Activated naive CD4-positive, alpha-beta T cell treated with anti-CD3 and anti-CD28 coated beads, Interleukin-2, amount 10 ng/mL, durations not matched to agents 7 days and 5 days (primary cell): ENCODE measurements at regions of chr1 and their contacts with region 1.

Region 1: DNA sequence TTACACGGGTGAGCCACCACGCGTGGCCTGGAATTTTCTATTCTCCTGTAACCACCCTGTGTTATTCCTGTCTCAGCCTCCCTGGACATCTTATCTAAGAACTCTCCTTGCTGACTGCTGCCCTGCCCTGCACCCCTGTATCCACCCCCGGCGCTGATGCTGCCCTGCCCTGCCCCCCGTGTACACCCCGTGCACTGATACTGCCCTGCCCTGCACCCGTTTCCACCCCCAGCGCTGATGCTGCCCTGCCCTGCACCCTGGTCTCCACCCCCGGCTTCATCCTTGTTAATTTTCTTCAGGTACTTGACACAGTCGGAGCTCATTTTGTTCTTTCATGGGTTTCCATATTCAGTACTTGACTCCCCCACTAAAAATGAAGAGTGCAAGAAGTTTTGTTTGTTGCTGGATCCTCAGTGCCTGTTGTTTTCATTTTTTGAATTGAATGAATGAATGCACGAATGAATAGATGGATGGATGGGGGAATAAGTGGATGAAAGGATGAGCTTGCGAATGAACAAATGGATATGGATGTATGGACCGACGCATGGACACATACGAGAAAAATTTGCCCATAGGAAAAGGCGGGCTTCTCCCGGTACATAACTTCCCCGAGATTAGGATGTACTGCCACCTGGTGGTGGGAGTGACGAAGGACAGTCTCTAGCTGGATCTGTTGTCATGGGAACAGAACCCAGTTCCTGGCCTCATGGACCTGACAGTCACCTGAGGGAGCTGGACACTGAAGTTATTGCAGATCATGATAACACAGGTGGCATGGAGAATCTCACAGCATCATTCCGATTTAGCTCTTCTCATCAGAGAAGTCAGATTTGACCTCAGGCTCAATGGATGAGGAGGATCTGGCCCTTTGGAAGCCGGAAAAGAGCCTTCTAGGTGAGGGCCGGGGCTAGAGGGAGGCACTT is 14.9 kb downstream of the AADACL4 start:
- DNase-seq: peak; percentile 81
- H3K4me3 Mint-ChIP-seq: no peak overlapping the region
- H3K27ac Mint-ChIP-seq: peak overlapping the region; percentile 0
- H3K4me1 Mint-ChIP-seq: peaks cover 8% of the 10 kb centered on the region
- H3K27me3 Mint-ChIP-seq: peaks cover 35% of the 10 kb centered on the region

Region 2: GRCh38 chr1:12275369-12275768 is 383.4 kb before region 1 on chr1:
- CTCF ChIA-PET with region 1: interaction called, 38 read pairs
- DNase-seq: peak; percentile 61
- H3K4me3 Mint-ChIP-seq: no peak overlapping the region
- H3K27ac Mint-ChIP-seq: no peak overlapping the region
- H3K4me1 Mint-ChIP-seq: no peaks in the 10 kb centered on the region
- H3K27me3 Mint-ChIP-seq: no peaks in the 10 kb centered on the region

Region 3: GRCh38 chr1:12314333-12314903 is 344.4 kb before region 1 on chr1:
- CTCF ChIA-PET with region 1: interaction called, 45 read pairs
- DNase-seq: no peak
- H3K4me3 Mint-ChIP-seq: no peak overlapping the region
- H3K27ac Mint-ChIP-seq: no peak overlapping the region
- H3K4me1 Mint-ChIP-seq: peaks cover 3% of the 10 kb centered on the region
- H3K27me3 Mint-ChIP-seq: no peaks in the 10 kb centered on the region

Region 4: GRCh38 chr1:12593621-12594066 is 65.1 kb before region 1 on chr1:
- CTCF ChIA-PET with region 1: no interaction called
- DNase-seq: no peak
- H3K4me3 Mint-ChIP-seq: no peak overlapping the region
- H3K27ac Mint-ChIP-seq: no peak overlapping the region
- H3K4me1 Mint-ChIP-seq: peaks cover 37% of the 10 kb centered on the region
- H3K27me3 Mint-ChIP-seq: peaks cover 33% of the 10 kb centered on the region

Region 5: GRCh38 chr1:12630946-12631530 is 27.8 kb before region 1 on chr1:
- CTCF ChIA-PET with region 1: interaction called, 16 read pairs
- DNase-seq: no peak
- H3K4me3 Mint-ChIP-seq: no peak overlapping the region
- H3K27ac Mint-ChIP-seq: no peak overlapping the region
- H3K4me1 Mint-ChIP-seq: peaks cover 22% of the 10 kb centered on the region
- H3K27me3 Mint-ChIP-seq: peaks cover 47% of the 10 kb centered on the region

Region 6: GRCh38 chr1:12669529-12670068 is 10.8 kb after region 1 on chr1:
- CTCF ChIA-PET with region 1: interaction called, 11 read pairs
- DNase-seq: no peak
- H3K4me3 Mint-ChIP-seq: no peak overlapping the region
- H3K27ac Mint-ChIP-seq: no peak overlapping the region
- H3K4me1 Mint-ChIP-seq: no peaks in the 10 kb centered on the region
- H3K27me3 Mint-ChIP-seq: peaks cover 24% of the 10 kb centered on the region